Mammary epithelial cell (primary cell): ENCODE measurements at regions of chr14 and their contacts with region 1.

Region 1: GRCh38 chr14:95561001-95561412 is 26.2 kb downstream of the GLRX5 start:
- DNase-seq: peak; percentile 73
- H3K4me3 ChIP-seq: no peak overlapping the region
- H3K27ac ChIP-seq: no peak overlapping the region
- H3K4me1 ChIP-seq: no peaks in the 10 kb centered on the region
- H3K27me3 ChIP-seq: no peaks in the 10 kb centered on the region
- CTCF ChIP-seq: peak; percentile 98 to 99

Region 2: GRCh38 chr14:95483309-95484165 is 77.5 kb before region 1 on chr14:
- CTCF ChIA-PET with region 1: no interaction called
- dilution Hi-C with region 1: no loop called
- in situ Hi-C with region 1: no loop called
- intact Hi-C with region 1: no loop called
- DNase-seq: peak; percentile 80
- H3K4me3 ChIP-seq: no peak overlapping the region
- H3K27ac ChIP-seq: no peak overlapping the region
- H3K4me1 ChIP-seq: peaks cover 18% of the 10 kb centered on the region
- H3K27me3 ChIP-seq: no peaks in the 10 kb centered on the region
- CTCF ChIP-seq: no peak

Region 3: GRCh38 chr14:95609387-95609990 is 48.5 kb after region 1 on chr14:
- CTCF ChIA-PET with region 1: no interaction called
- dilution Hi-C with region 1: no loop called
- in situ Hi-C with region 1: no loop called
- intact Hi-C with region 1: loop called (anchors 1 kb)
- DNase-seq: peak; percentile 17
- H3K4me3 ChIP-seq: no peak overlapping the region
- H3K27ac ChIP-seq: no peak overlapping the region
- H3K4me1 ChIP-seq: no peaks in the 10 kb centered on the region
- H3K27me3 ChIP-seq: peaks cover 4% of the 10 kb centered on the region
- CTCF ChIP-seq: peak; percentile 41 to 65

Region 4: GRCh38 chr14:95774265-95775160 is 213.5 kb after region 1 on chr14:
- CTCF ChIA-PET with region 1: no interaction called
- dilution Hi-C with region 1: no loop called
- in situ Hi-C with region 1: loop called in 1 of 2 experiments (anchors 10 kb)
- intact Hi-C with region 1: loop called (anchors 1 kb)
- DNase-seq: peak; percentile 23
- H3K4me3 ChIP-seq: no peak overlapping the region
- H3K27ac ChIP-seq: no peak overlapping the region
- H3K4me1 ChIP-seq: no peaks in the 10 kb centered on the region
- H3K27me3 ChIP-seq: peaks cover 2% of the 10 kb centered on the region
- CTCF ChIP-seq: peak; percentile 82 to 85

Region 5: DNA sequence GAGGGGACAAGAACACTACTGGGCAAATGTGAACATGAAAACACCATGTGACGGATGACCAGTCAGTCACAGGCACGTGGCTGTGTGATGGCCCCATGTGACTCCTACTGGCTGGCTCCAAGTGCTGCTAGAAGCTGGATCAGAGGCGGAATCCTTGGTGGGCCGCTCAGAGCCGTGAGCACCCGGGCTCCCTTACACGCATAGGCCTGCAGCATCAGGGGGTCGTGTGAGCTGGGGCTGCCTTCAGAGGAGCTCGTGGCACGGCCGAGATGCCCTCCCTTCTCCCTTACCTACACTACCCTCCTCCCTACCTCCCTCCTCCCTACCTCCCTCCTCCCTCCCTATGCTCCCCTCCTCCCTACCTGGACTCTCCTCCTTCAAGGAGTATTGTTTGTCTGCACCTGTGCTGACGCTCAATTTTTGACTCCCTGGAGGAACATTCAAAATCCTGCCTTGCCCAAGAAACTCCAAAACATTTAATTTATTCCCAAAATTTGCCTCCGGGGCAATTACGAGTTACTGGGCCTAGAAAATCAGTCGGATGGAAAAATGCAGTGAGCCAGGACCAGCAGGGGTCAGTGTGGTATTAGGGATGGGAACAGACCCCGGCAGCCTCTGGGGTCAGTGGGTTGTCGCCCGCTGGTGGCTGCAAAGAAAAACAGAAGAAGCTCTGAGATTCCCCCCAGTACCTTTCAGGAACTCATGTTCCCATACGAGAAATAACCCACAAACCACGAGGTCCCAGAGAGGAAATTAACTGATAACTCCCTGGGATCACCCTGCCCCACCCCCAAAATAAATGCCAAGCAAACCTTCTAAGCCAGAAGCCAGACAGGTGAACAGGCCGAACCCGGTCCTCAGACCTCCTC is 539.4 kb after region 1 on chr14:
- CTCF ChIA-PET with region 1: no interaction called
- dilution Hi-C with region 1: loop called (anchors 25 kb)
- in situ Hi-C with region 1: no loop called
- intact Hi-C with region 1: loop called (anchors 1 kb)
- DNase-seq: peak; percentile 57
- H3K4me3 ChIP-seq: no peak overlapping the region
- H3K27ac ChIP-seq: no peak overlapping the region
- H3K4me1 ChIP-seq: peaks cover 16% of the 10 kb centered on the region
- H3K27me3 ChIP-seq: no peaks in the 10 kb centered on the region
- CTCF ChIP-seq: peak; percentile 75 to 94

Region 6: GRCh38 chr14:96275177-96276112 is 714.4 kb after region 1 on chr14:
- CTCF ChIA-PET with region 1: no interaction called
- dilution Hi-C with region 1: no loop called
- in situ Hi-C with region 1: loop called in 1 of 2 experiments (anchors 25 kb)
- intact Hi-C with region 1: loop called (anchors 2 kb)
- DNase-seq: peak; percentile 29
- H3K4me3 ChIP-seq: no peak overlapping the region
- H3K27ac ChIP-seq: no peak overlapping the region
- H3K4me1 ChIP-seq: peaks cover 10% of the 10 kb centered on the region
- H3K27me3 ChIP-seq: no peaks in the 10 kb centered on the region
- CTCF ChIP-seq: peak; percentile 97 to 99